CD4-positive, alpha-beta T cell (primary cell): ENCODE measurements at regions of chr3 and their contacts with region 1.

Region 1: DNA sequence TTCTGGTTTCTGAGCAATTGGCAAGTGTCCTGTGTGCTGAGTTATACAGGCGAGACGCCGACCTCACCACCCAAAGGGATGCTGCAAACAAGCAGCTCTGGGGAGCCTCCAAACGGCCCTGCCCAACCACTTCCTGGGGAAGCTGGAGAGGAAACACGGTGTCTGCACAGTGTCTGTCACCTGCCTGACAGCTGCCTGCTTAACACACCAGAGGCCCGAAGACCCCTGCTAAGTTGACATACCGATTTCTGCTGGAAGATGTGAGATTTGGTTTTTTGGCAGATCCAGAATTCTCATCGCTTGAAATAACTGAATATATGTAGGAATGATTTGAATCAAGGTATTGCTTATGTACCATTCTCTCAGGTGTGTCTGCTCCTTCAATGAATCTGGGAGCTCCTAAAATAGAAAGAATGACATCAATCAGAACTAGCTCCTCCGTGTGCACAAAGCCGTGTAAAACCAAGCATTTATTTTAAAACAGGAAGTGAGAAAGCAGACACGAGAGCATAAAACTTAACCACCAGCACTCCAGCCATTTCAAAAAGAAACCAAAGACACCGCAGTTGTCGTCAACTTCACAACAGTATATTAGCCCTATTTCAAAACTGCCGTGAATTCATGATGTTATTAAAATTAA is 27.2 kb downstream of the LRRC2 start:
- DNase-seq: peak; percentile 75 to 95 (median 86)
- ATAC-seq: peak; percentile 90
- H3K4me3 ChIP-seq: peak overlapping the region; percentile 44
- H3K4me3 Mint-ChIP-seq: peak overlapping the region; percentile 62
- H3K27ac ChIP-seq: peak overlapping the region; percentile 68 to 92
- H3K27ac Mint-ChIP-seq: peak overlapping the region; percentile 95
- H3K4me1 ChIP-seq: peaks cover 45% of the 10 kb centered on the region
- H3K4me1 Mint-ChIP-seq: peaks cover 56% of the 10 kb centered on the region
- H3K27me3 ChIP-seq: no peaks in the 10 kb centered on the region
- H3K27me3 Mint-ChIP-seq: no peaks in the 10 kb centered on the region
- CTCF ChIP-seq: no peak

Region 2: DNA sequence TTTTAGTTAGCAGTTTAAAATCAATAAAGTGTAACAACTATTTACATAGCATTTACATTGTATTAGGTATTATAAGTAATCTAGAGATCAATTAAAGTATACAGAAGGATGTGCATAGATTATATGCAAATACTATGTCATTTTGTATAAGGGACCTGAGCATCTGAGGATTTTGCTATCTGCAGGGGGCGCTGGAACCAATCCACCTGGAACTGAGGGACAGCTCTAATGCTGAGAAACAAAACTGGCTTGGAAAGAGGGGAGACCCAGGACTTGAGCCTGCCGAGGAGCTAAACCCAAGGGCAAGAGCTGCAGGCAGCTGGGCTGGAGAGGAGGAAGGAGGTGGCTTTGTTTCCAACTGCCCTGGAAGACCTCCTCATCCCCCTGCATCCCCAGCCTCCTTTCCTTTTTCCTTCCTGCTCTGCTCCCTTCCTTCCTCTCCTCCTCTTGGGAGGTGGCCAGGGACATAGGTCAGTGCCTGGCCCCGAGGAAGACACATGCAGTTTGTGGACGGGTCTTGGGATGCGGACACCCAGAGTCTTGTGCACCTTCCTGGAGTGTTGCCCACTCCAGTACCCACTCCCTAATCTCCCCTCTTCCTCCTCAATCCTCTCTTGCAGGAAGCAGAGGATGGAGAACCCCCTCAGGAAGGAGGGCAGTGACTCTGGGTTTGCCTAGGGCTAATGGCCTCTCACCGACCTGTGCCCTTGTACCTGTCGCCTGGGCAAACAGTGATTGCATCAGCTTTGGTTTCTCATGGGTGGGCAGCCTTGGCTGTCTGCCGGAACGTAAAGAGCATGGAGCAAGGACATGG is 42.0 kb before region 1 on chr3:
- CTCF ChIA-PET with region 1: interaction called, 6 read pairs
- POLR2A ChIA-PET with region 1: interaction called, 5 read pairs
- intact Hi-C with region 1: loop called in 1 of 2 experiments (anchors 2 kb)
- DNase-seq: peak; percentile 34 to 85 (median 56)
- ATAC-seq: peak; percentile 67
- H3K4me3 ChIP-seq: no peak overlapping the region
- H3K4me3 Mint-ChIP-seq: no peak overlapping the region
- H3K27ac ChIP-seq: no peak overlapping the region
- H3K27ac Mint-ChIP-seq: no peak overlapping the region
- H3K4me1 ChIP-seq: peaks cover 11% of the 10 kb centered on the region
- H3K4me1 Mint-ChIP-seq: peaks cover 32% of the 10 kb centered on the region
- H3K27me3 ChIP-seq: no peaks in the 10 kb centered on the region
- H3K27me3 Mint-ChIP-seq: no peaks in the 10 kb centered on the region
- CTCF ChIP-seq: peak; percentile 65

Region 3: DNA sequence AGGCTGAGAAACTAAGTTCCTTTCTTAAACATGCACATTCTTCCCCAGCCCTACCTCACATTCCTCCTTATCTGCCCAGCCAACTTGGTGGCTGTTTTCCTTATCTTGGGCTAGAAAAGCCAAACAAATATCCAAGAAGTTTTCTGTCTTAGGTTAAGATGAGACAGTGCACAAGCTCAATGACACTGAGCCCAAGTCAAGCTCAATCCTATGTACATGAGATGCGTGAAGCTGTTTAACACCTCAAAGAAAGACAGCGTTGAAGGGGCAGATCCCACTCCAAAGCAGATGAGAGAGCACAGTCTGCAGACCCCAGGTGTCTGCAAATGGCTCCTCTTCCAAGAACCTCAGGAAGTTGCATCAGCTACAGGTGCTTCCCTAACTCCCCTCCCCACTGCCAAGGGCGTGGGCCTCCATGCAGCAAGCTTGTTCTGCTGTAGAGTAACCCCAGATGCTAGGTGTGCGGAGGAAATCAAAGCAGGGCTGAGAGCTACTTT is 10.5 kb after region 1 on chr3:
- CTCF ChIA-PET with region 1: interaction called, 4 read pairs
- POLR2A ChIA-PET with region 1: interaction called, 12 read pairs
- intact Hi-C with region 1: no loop called
- DNase-seq: no peak
- ATAC-seq: no peak
- H3K4me3 ChIP-seq: no peak overlapping the region
- H3K4me3 Mint-ChIP-seq: no peak overlapping the region
- H3K27ac ChIP-seq: no peak overlapping the region
- H3K27ac Mint-ChIP-seq: peak overlapping the region; percentile 54
- H3K4me1 ChIP-seq: peaks cover 12% of the 10 kb centered on the region
- H3K4me1 Mint-ChIP-seq: peaks cover 32% of the 10 kb centered on the region
- H3K27me3 ChIP-seq: no peaks in the 10 kb centered on the region
- H3K27me3 Mint-ChIP-seq: no peaks in the 10 kb centered on the region
- CTCF ChIP-seq: no peak

Region 4: DNA sequence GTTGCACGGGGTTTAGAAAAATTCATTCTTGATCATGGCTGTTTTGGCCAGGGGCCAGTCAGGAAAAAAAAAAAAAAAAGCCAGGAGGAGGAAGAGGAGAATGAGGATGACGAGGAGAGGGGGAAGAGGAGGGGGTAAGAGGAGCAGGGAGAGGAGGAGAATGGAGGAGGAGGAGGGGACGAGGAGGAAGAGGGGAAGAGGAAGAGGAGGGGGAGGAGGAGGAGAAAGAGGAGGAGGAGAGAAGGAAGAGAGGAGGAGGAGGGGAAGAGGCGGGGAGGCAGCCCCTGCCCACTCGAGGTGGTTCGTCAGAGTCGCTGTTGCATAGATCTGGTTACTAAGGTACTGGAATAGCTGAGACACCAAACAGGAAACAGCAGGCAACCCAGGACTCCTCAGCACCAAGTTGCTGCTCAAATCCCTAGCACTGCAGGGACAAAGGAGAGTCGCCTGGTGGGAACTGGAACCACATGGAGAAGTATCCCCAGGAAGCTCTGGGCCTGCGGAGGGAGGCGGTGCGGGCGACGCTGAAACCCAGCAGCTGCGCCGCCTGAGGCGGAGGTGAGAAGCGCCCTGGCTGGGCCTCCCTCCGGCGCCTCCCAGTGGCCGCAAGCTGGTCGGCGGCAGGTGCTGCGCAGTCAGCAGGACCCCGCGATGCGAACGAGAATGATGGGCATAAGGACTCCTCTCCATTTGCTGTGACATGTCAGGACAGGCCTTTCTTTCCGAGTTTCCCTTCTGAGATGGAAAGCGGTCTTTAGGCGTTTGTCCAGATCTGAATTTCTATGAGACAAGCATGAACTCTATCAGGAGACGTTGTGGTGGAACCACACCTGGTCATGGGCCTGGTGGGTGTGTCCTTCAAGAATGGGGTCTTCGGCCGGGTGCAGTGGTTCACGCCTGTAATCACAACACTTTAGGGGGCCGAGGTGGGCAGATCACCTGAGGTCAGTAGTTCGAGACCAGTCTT is 90.9 kb after region 1 on chr3:
- CTCF ChIA-PET with region 1: interaction called, 16 read pairs
- POLR2A ChIA-PET with region 1: interaction called, 14 read pairs
- intact Hi-C with region 1: no loop called
- DNase-seq: peak; percentile 65 to 90 (median 75)
- ATAC-seq: peak; percentile 95
- H3K4me3 ChIP-seq: peak overlapping the region; percentile 46
- H3K4me3 Mint-ChIP-seq: peak overlapping the region; percentile 76
- H3K27ac ChIP-seq: peak overlapping the region in 1 of 2 donors; percentile 10
- H3K27ac Mint-ChIP-seq: peak overlapping the region; percentile 89
- H3K4me1 ChIP-seq: peaks cover 20% of the 10 kb centered on the region
- H3K4me1 Mint-ChIP-seq: peaks cover 34% of the 10 kb centered on the region
- H3K27me3 ChIP-seq: no peaks in the 10 kb centered on the region
- H3K27me3 Mint-ChIP-seq: peaks cover 3% of the 10 kb centered on the region
- CTCF ChIP-seq: peak; percentile 100